ENCODE measurements at regions of chr1 and their contacts with region 1.

Region 1: GRCh38 chr1:93846211-93846991 is 32.6 kb downstream of the DNTTIP2 start:
- H3K4me3 Mint-ChIP-seq: peak overlapping the region; percentile 97
- H3K27ac Mint-ChIP-seq: peak overlapping the region; percentile 94
- H3K4me1 Mint-ChIP-seq: peaks cover 36% of the 10 kb centered on the region
- H3K27me3 Mint-ChIP-seq: no peaks in the 10 kb centered on the region

Region 2: DNA sequence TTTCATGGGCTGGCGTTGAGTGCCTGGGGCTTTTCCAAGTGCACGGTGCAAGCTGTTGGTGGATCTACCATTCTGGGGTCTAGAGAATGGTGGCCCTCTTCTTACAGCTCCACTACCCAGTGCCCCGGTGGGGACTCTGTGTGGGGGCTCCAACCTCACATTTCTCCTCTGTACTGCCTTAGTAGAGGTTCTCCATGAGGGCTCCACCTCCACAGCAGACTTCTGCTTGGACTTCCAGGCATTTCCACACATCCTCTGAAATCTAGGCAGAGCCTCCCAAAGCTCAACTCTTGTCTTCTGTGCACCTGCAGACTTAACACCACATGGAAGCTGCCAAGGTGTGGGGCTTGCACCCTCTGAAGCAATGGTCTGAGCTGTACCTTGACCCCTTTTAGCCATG is 583.8 kb before region 1 on chr1:
- intact Hi-C with region 1: no loop called
- H3K4me3 Mint-ChIP-seq: no peak overlapping the region
- H3K27ac Mint-ChIP-seq: no peak overlapping the region
- H3K4me1 Mint-ChIP-seq: no peaks in the 10 kb centered on the region
- H3K27me3 Mint-ChIP-seq: no peaks in the 10 kb centered on the region

Region 3: GRCh38 chr1:93345633-93346420 is 500.6 kb before region 1 on chr1 and contains the start of gene DR1:
- intact Hi-C with region 1: loop called (anchors 2 kb)
- H3K4me3 Mint-ChIP-seq: peak within 1 kb of the TSS; percentile 99
- H3K27ac Mint-ChIP-seq: peak within 1 kb of the TSS; percentile 98
- H3K4me1 Mint-ChIP-seq: no peaks in the 10 kb centered on the region
- H3K27me3 Mint-ChIP-seq: no peaks in the 10 kb centered on the region

Region 4: DNA sequence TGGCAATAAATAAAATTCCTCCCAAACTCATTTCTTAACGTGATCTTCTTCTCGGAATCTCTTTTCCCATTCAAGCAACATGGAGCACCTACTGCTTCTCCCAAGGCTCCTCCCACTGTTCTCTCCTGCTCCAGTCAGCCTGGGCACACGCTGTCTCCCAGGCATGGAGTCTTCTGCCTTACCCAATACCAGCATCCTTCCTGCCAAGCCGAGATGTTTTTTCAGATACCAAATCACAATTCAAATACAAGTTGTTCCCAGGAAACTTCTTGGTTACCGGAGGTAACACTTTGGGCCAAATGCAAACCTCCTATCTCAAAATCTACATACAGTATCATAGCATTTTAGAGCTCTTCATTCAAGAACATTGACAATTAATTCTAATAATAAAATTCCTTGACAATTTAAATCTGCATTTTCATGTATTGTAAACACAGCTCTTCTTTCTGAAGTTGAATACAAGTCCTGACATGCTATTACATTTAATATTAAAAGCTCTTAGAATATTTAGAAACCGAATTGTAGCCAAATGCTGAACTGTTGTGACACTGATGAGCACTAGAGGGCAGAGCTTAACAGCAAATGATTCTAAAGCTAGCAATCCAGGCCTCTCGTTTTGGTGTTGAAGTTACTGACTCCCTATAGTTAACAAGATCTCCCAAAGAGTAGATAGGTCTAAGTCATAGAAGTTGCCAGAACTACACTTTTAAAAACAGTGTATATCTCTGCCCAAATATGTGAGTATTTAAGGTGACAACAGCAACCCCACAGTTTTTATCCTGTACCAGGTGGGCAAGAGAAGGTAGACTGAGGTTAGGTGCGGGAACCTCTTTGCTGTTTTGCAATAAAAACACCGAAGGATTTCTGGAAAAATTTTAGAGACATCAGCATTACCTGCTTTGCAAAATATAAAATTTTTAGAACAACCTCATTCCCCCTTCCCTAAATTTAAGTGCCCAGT is 217.0 kb before region 1 on chr1:
- intact Hi-C with region 1: loop called (anchors 1 kb)
- H3K4me3 Mint-ChIP-seq: no peak overlapping the region
- H3K27ac Mint-ChIP-seq: peak overlapping the region; percentile 71
- H3K4me1 Mint-ChIP-seq: peaks cover 23% of the 10 kb centered on the region
- H3K27me3 Mint-ChIP-seq: no peaks in the 10 kb centered on the region

Region 5: DNA sequence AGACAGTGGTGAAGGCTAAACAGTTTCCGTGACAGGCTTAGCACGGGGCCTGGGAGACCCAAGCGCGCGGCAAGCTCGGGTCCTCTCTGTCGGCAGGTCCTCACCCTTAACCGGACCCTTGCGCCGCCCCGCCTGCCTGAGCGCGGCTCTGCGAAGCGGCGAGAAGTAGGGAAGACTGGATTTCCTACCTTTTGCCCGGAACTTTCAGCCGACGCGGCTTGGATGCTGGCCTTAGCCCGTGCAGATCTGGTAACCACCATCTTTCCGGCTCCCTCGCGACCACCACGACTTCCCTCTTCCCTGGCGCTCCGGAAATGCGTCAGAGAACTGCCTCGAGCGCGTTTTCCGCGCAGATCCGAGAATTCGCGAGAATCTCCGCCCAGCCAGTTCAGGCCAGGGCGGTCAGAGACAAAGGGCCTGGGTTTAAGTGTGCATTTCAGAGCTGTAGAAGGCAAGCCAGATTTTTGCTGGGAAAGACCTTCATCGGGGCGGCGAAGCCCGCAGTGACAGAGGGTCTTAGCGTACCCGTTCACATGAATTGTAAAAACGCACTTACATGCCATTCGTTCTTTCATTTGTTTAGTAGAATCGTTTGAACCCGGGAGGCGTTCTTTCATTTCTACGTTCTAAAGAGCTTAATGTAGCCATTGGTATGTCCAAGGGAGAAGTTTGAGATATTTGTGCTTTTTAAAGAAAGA is 32.6 kb after region 1 on chr1 and contains the start of gene DNTTIP2:
- intact Hi-C with region 1: loop called (anchors 1 kb)
- H3K4me3 Mint-ChIP-seq: peak within 1 kb of the TSS; percentile 88
- H3K27ac Mint-ChIP-seq: peak within 1 kb of the TSS; percentile 95
- H3K4me1 Mint-ChIP-seq: peaks cover 43% of the 10 kb centered on the region
- H3K27me3 Mint-ChIP-seq: no peaks in the 10 kb centered on the region